Activated B cell treated with CpG ODN at 0.5 μM for 24 hours (primary cell): ENCODE measurements at regions of chr9 and their contacts with region 1.

Region 1: GRCh38 chr9:112819635-112820496 is 69.3 kb downstream of the SNX30 start:
- DNase-seq: no peak
- ATAC-seq: peak; percentile 69
- H3K4me3 Mint-ChIP-seq: no peak overlapping the region
- H3K27ac Mint-ChIP-seq: peak overlapping the region; percentile 7
- H3K4me1 Mint-ChIP-seq: peaks cover 23% of the 10 kb centered on the region
- H3K27me3 Mint-ChIP-seq: no peaks in the 10 kb centered on the region
- CTCF ChIP-seq: peak; percentile 83

Region 2: GRCh38 chr9:111759762-111760639 is 1059.9 kb before region 1 on chr9:
- CTCF ChIA-PET with region 1: no interaction called
- POLR2A ChIA-PET with region 1: no interaction called
- intact Hi-C with region 1: loop called (anchors 2 kb)
- DNase-seq: no peak
- ATAC-seq: peak; percentile 84
- H3K4me3 Mint-ChIP-seq: no peak overlapping the region
- H3K27ac Mint-ChIP-seq: no peak overlapping the region
- H3K4me1 Mint-ChIP-seq: peaks cover 4% of the 10 kb centered on the region
- H3K27me3 Mint-ChIP-seq: no peaks in the 10 kb centered on the region
- CTCF ChIP-seq: peak; percentile 55

Region 3: DNA sequence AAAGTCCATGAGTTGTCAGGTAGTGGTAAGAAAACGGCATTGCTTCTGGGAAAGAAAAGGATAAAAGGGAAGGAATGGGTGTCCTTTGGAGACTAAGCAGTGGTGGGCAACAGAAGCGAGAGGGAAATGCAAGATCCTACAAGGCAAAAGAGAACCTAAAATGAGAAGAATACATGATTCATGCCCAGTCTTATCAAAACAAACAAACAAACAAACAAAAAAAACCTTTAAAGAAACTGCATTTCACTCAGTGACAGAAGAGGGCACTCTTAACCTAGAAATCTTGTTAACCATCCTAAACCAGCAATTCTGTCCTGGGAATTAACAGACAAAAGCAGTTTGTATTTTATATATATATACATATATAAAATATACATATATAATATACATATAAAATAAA is 733.2 kb before region 1 on chr9:
- CTCF ChIA-PET with region 1: interaction called, 4 read pairs
- POLR2A ChIA-PET with region 1: interaction called, 7 read pairs
- intact Hi-C with region 1: loop called (anchors 2 kb)
- DNase-seq: no peak
- ATAC-seq: no peak
- H3K4me3 Mint-ChIP-seq: no peak overlapping the region
- H3K27ac Mint-ChIP-seq: no peak overlapping the region
- H3K4me1 Mint-ChIP-seq: peaks cover 4% of the 10 kb centered on the region
- H3K27me3 Mint-ChIP-seq: no peaks in the 10 kb centered on the region
- CTCF ChIP-seq: no peak

Region 4: DNA sequence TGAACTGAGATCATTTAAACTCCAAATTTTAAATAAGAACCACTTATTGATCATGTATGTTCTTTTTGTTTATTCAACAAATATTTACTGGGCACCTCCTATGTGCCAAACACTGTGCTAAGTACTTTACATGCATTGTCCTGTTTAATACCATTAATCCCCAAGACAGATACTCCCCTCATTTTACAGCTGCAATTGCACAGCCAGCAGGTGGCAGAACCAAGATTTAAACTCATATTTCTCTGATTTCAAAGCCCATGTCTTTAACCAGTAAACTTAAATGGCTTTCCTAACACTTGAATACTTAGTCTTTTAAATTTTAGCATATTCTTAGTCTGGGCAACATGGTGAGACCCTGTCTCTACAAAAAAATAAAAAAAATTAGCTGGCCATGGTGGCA is 376.7 kb before region 1 on chr9:
- CTCF ChIA-PET with region 1: interaction called, 27 read pairs
- POLR2A ChIA-PET with region 1: no interaction called
- intact Hi-C with region 1: loop called (anchors 1 kb)
- DNase-seq: no peak
- ATAC-seq: no peak
- H3K4me3 Mint-ChIP-seq: no peak overlapping the region
- H3K27ac Mint-ChIP-seq: no peak overlapping the region
- H3K4me1 Mint-ChIP-seq: peaks cover 30% of the 10 kb centered on the region
- H3K27me3 Mint-ChIP-seq: no peaks in the 10 kb centered on the region
- CTCF ChIP-seq: no peak

Region 5: DNA sequence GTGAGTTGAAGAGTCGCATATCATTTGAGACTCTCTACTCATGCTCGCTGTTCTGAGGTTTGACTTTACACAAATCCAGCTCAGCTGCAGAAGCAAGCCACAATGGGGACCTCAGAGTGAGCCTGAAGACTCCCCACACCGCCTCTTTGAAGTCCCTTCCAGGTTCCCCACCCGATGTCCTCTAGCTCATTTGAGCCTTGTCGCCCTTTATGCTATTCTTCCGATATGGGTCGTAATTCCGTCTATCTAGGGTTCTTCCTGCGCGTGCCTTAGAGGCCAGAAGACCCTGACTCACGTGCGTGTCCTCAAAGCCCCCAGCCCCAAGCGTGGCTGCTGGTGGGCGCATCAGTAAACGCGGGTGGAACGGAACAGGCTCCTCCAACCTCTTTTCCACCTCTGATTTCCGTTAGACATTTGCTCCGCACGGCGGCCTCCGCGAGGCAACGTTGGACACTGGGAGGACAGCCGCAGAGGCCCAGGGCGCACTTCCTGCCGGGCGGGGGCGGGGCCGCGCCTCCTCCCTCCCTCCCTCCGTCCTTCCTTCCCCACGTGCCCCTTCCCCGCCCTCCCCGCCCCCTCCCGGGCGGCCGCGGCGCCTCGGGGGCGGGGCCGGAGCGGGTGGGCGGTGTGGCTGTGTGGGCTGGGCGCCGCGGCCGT is 69.6 kb before region 1 on chr9 and contains the start of gene SNX30:
- CTCF ChIA-PET with region 1: no interaction called
- POLR2A ChIA-PET with region 1: no interaction called
- intact Hi-C with region 1: loop called (anchors 2 kb)
- DNase-seq: peak; percentile 90
- ATAC-seq: peak; percentile 90
- H3K4me3 Mint-ChIP-seq: peak within 1 kb of the TSS; percentile 93
- H3K27ac Mint-ChIP-seq: peak within 1 kb of the TSS; percentile 94
- H3K4me1 Mint-ChIP-seq: peaks cover 42% of the 10 kb centered on the region
- H3K27me3 Mint-ChIP-seq: no peaks in the 10 kb centered on the region
- CTCF ChIP-seq: no peak
- total RNA-seq, gene SNX30: 6.1 and 6.5 TPM in 2 replicates

Region 6: GRCh38 chr9:112809351-112809848 is 10.5 kb before region 1 on chr9:
- CTCF ChIA-PET with region 1: interaction called, 10 read pairs
- POLR2A ChIA-PET with region 1: interaction called, 6 read pairs
- intact Hi-C with region 1: loop called (anchors 1 kb)
- DNase-seq: no peak
- ATAC-seq: peak; percentile 93
- H3K4me3 Mint-ChIP-seq: no peak overlapping the region
- H3K27ac Mint-ChIP-seq: no peak overlapping the region
- H3K4me1 Mint-ChIP-seq: peaks cover 23% of the 10 kb centered on the region
- H3K27me3 Mint-ChIP-seq: peaks cover 10% of the 10 kb centered on the region
- CTCF ChIP-seq: no peak